ENCODE measurements at regions of chr5 and their contacts with region 1.

Region 1: DNA sequence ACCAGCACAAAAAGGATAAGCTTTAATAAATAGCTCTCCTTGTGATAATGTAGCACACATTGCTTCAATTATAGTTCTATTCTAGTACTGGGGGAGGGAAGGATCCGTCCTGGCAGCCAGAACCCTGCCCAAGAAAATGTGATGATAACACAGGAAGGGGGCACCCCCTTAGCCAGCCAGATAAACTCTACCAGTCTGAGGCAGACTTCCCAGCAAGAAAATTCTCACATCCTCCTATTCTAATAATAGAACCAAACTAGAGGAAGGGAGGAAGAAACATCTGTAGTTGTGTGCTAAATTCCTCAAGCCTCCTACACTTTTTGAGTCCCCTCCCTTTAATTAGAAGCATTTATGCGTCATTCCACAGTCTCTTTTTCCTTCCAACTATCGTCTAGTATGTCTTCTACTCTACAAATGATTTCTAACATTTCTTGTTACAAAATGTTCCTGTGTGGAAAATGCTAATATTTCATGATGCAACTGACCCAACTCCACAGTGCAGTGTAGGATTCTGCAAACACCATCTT is 261.0 kb downstream of the SEMA5A start:
- DNase-seq: peak in 1 of 2 donors; percentile 73
- H3K4me3 ChIP-seq: peak overlapping the region in 1 of 2 donors; percentile 10
- H3K27ac ChIP-seq: peak overlapping the region; percentile 83 to 84
- H3K4me1 ChIP-seq: peaks cover 0 to 18% of the 10 kb centered on the region in 2 donors
- H3K27me3 ChIP-seq: no peaks in the 10 kb centered on the region
- CTCF ChIP-seq: no peak

Region 2: GRCh38 chr5:9233712-9234111 is 51.1 kb before region 1 on chr5:
- intact Hi-C with region 1: no loop called
- DNase-seq: no peak
- H3K4me3 ChIP-seq: no peak overlapping the region
- H3K27ac ChIP-seq: no peak overlapping the region
- H3K4me1 ChIP-seq: no peaks in the 10 kb centered on the region
- H3K27me3 ChIP-seq: no peaks in the 10 kb centered on the region
- CTCF ChIP-seq: no peak

Region 3: DNA sequence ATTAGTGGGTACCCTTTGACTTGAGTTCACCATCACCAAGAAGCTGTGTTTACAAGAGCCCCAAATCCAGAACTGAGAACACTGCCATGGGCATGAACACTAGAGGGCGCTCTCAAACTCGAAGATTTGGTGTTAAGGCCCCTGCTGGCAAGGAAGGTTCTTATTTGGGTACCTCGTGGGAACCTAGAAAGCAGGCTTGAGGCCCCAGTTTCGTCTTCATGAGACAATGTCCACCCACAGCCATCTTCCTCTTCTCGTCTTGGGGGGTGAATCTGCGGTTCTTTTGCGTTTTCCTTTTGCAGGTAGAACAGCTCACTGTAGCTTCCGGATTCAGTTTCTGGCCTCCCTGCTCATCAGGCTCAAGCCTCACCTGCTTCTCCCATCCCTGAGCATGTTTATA is 77.0 kb after region 1 on chr5:
- intact Hi-C with region 1: loop called (anchors 5 kb)
- DNase-seq: no peak
- H3K4me3 ChIP-seq: no peak overlapping the region
- H3K27ac ChIP-seq: peak overlapping the region in 1 of 2 donors; percentile 75
- H3K4me1 ChIP-seq: peaks cover 0 to 9% of the 10 kb centered on the region in 2 donors
- H3K27me3 ChIP-seq: no peaks in the 10 kb centered on the region
- CTCF ChIP-seq: peak in 2 of 3 experiments; percentile 35 to 42

Region 4: GRCh38 chr5:9401786-9402472 is 117.1 kb after region 1 on chr5:
- intact Hi-C with region 1: no loop called
- DNase-seq: no peak
- H3K4me3 ChIP-seq: no peak overlapping the region
- H3K27ac ChIP-seq: no peak overlapping the region
- H3K4me1 ChIP-seq: no peaks in the 10 kb centered on the region
- H3K27me3 ChIP-seq: no peaks in the 10 kb centered on the region
- CTCF ChIP-seq: no peak

Measured in ascending aorta (tissue), 2 donors.